ENCODE measurements at regions of chr10 and their contacts with region 1.

Region 1: GRCh38 chr10:92699518-92700381 is 10.0 kb downstream of the HHEX start:
- DNase-seq: peak; percentile 67

Region 2: GRCh38 chr10:92689663-92690210 is 10.0 kb before region 1 on chr10 and contains the start of gene HHEX:
- CTCF ChIA-PET with region 1: no interaction called
- POLR2A ChIA-PET with region 1: interaction called, 20 read pairs
- DNase-seq: peak; percentile 83